ENCODE measurements at regions of chr19 and their contacts with region 1.

Region 1: GRCh38 chr19:49391581-49392399 is 3.7 kb downstream of the KASH5 start:
- DNase-seq: peak; percentile 82 to 93
- H3K4me3 ChIP-seq: no peak overlapping the region
- H3K27ac ChIP-seq: no peak overlapping the region
- H3K4me1 ChIP-seq: peaks cover 0 to 13% (median 1%) of the 10 kb centered on the region in 4 donors
- H3K27me3 ChIP-seq: peaks cover 0 to 63% (median 10%) of the 10 kb centered on the region in 3 donors
- CTCF ChIP-seq: peak in 6 of 7 experiments; percentile 31 to 91 (median 79)
- EP300 ChIP-seq: no peak
- POLR2A ChIP-seq: no peak

Region 2: GRCh38 chr19:49347846-49348245 is 43.9 kb before region 1 on chr19:
- intact Hi-C with region 1: no loop called
- DNase-seq: peak in 1 of 2 donors; percentile 70
- H3K4me3 ChIP-seq: no peak overlapping the region
- H3K27ac ChIP-seq: no peak overlapping the region
- H3K4me1 ChIP-seq: no peaks in the 10 kb centered on the region
- H3K27me3 ChIP-seq: no peaks in the 10 kb centered on the region
- CTCF ChIP-seq: no peak
- EP300 ChIP-seq: no peak
- POLR2A ChIP-seq: no peak

Region 3: GRCh38 chr19:49430678-49431329 is 39.0 kb after region 1 on chr19:
- intact Hi-C with region 1: loop called (anchors 5 kb)
- DNase-seq: no peak
- H3K4me3 ChIP-seq: no peak overlapping the region
- H3K27ac ChIP-seq: no peak overlapping the region
- H3K4me1 ChIP-seq: peaks cover 11 to 24% (median 21%) of the 10 kb centered on the region in 4 donors
- H3K27me3 ChIP-seq: peaks cover 55 to 100% (median 100%) of the 10 kb centered on the region in 3 donors
- CTCF ChIP-seq: no peak
- EP300 ChIP-seq: no peak
- POLR2A ChIP-seq: no peak

Region 4: GRCh38 chr19:49443366-49444099 is 51.7 kb after region 1 on chr19:
- intact Hi-C with region 1: loop called (anchors 5 kb)
- DNase-seq: peak; percentile 95 to 98
- H3K4me3 ChIP-seq: peak overlapping the region; percentile 54 to 89 (median 66)
- H3K27ac ChIP-seq: peak overlapping the region; percentile 68 to 89 (median 82)
- H3K4me1 ChIP-seq: peaks cover 0 to 46% (median 28%) of the 10 kb centered on the region in 4 donors
- H3K27me3 ChIP-seq: peaks cover 5 to 46% (median 38%) of the 10 kb centered on the region in 3 donors
- CTCF ChIP-seq: peak in 6 of 7 experiments; percentile 26 to 93 (median 78)
- EP300 ChIP-seq: no peak
- POLR2A ChIP-seq: no peak